PC-9 (cell line): ENCODE measurements at regions of chr5 and their contacts with region 1.

Region 1: GRCh38 chr5:1167728-1168709 is 33.4 kb upstream of the SLC6A19 start:
- DNase-seq: peak; percentile 62 to 87
- H3K4me3 ChIP-seq: no peak overlapping the region
- H3K27ac ChIP-seq: no peak overlapping the region
- H3K4me1 ChIP-seq: no peaks in the 10 kb centered on the region
- H3K27me3 ChIP-seq: peaks cover 42% of the 10 kb centered on the region
- CTCF ChIP-seq: peak; percentile 89

Region 2: DNA sequence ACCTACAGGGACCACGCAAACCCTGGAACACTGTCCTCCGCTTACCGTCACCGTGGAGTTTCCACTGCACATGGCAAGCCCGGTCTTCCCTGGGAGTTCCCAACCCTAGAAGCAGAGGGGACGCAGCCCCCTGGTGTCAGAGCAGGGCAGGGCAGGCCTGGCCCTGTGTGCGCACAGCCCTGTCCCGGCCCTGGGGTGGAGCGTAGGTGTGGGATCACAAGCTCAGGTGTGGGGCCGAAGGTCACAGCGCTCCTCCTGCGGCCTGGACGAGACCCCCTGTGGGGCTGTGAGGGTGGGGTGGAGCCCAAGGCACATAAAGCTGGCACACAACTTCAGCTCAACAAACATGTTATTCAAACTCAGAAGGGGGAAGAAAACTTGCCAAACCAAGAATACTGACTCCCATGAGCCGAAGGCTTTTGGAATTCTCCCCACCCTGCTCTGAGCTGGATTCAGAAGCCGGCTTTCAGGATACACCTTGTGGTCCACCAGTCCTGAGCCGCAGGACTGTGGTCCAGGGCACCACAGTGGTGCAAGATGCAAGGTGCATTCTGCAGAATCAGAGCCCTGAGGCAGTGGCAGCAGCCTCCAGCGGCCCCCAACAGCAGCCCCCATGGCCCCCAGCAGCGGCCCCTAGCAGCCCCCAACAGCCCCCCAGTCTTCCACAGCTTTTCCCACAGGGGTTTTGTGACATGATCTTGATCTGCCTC is 736.9 kb before region 1 on chr5:
- CTCF ChIA-PET with region 1: no interaction called
- POLR2A ChIA-PET with region 1: no interaction called
- intact Hi-C with region 1: no loop called
- DNase-seq: peak in 1 of 2 experiments; percentile 78
- H3K4me3 ChIP-seq: no peak overlapping the region
- H3K27ac ChIP-seq: no peak overlapping the region
- H3K4me1 ChIP-seq: no peaks in the 10 kb centered on the region
- H3K27me3 ChIP-seq: no peaks in the 10 kb centered on the region
- CTCF ChIP-seq: peak; percentile 90

Region 3: GRCh38 chr5:472656-473553 is 695.1 kb before region 1 on chr5:
- CTCF ChIA-PET with region 1: interaction called, 10 read pairs
- POLR2A ChIA-PET with region 1: no interaction called
- intact Hi-C with region 1: no loop called
- DNase-seq: peak; percentile 65 to 99
- H3K4me3 ChIP-seq: peak overlapping the region; percentile 67
- H3K27ac ChIP-seq: peak overlapping the region; percentile 59
- H3K4me1 ChIP-seq: peaks cover 19% of the 10 kb centered on the region
- H3K27me3 ChIP-seq: no peaks in the 10 kb centered on the region
- CTCF ChIP-seq: no peak

Region 4: GRCh38 chr5:923281-923873 is 244.6 kb before region 1 on chr5:
- CTCF ChIA-PET with region 1: interaction called, 18 read pairs
- POLR2A ChIA-PET with region 1: no interaction called
- intact Hi-C with region 1: loop called (anchors 1 kb)
- DNase-seq: peak; percentile 60 to 95
- H3K4me3 ChIP-seq: no peak overlapping the region
- H3K27ac ChIP-seq: no peak overlapping the region
- H3K4me1 ChIP-seq: no peaks in the 10 kb centered on the region
- H3K27me3 ChIP-seq: no peaks in the 10 kb centered on the region
- CTCF ChIP-seq: peak; percentile 96

Region 5: DNA sequence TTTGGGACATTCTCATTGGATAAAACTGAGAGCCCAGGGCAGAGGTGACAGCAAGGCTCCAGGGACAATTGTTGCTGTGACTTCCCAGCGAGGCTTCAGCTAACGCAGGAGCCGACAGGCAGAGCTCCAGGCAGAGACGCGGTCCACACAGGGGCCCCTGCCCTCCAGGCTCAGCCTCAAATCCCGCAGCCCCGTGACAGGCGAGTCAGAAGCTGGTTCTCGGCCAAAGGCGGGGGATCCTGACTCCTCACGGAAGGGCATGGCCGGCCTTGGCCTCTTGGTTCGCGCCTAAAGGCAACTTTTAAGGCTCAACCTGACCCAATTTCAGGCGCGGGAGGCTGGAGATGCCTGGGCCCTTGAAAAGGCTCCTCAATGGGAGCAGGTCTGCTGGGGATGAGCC is 77.5 kb before region 1 on chr5:
- CTCF ChIA-PET with region 1: no interaction called
- POLR2A ChIA-PET with region 1: no interaction called
- intact Hi-C with region 1: no loop called
- DNase-seq: peak in 1 of 2 experiments; percentile 51
- H3K4me3 ChIP-seq: no peak overlapping the region
- H3K27ac ChIP-seq: no peak overlapping the region
- H3K4me1 ChIP-seq: no peaks in the 10 kb centered on the region
- H3K27me3 ChIP-seq: no peaks in the 10 kb centered on the region
- CTCF ChIP-seq: no peak

Region 6: GRCh38 chr5:1199649-1200494 is 31.9 kb after region 1 on chr5:
- CTCF ChIA-PET with region 1: no interaction called
- POLR2A ChIA-PET with region 1: no interaction called
- intact Hi-C with region 1: no loop called
- DNase-seq: no peak
- H3K4me3 ChIP-seq: no peak overlapping the region
- H3K27ac ChIP-seq: no peak overlapping the region
- H3K4me1 ChIP-seq: no peaks in the 10 kb centered on the region
- H3K27me3 ChIP-seq: peaks cover 96% of the 10 kb centered on the region
- CTCF ChIP-seq: no peak

Region 7: GRCh38 chr5:1244976-1245375 is 77.0 kb after region 1 on chr5:
- CTCF ChIA-PET with region 1: no interaction called
- POLR2A ChIA-PET with region 1: no interaction called
- intact Hi-C with region 1: loop called (anchors 1 kb)
- DNase-seq: peak in 1 of 2 experiments; percentile 40
- H3K4me3 ChIP-seq: no peak overlapping the region
- H3K27ac ChIP-seq: no peak overlapping the region
- H3K4me1 ChIP-seq: no peaks in the 10 kb centered on the region
- H3K27me3 ChIP-seq: peaks cover 98% of the 10 kb centered on the region
- CTCF ChIP-seq: peak; percentile 57

Region 8: GRCh38 chr5:1344975-1345838 is 177.2 kb after region 1 on chr5 and contains the start of gene CLPTM1L:
- CTCF ChIA-PET with region 1: no interaction called
- POLR2A ChIA-PET with region 1: no interaction called
- intact Hi-C with region 1: loop called (anchors 5 kb)
- DNase-seq: peak; percentile 78 to 96
- H3K4me3 ChIP-seq: peak within 1 kb of the TSS; percentile 90
- H3K27ac ChIP-seq: 0 out of 2 replicates have a peak within 1 kb of the TSS, but pooled peaks have one; percentile 10
- H3K4me1 ChIP-seq: peaks cover 18% of the 10 kb centered on the region
- H3K27me3 ChIP-seq: no peaks in the 10 kb centered on the region
- CTCF ChIP-seq: no peak
- total RNA-seq, gene CLPTM1L: 260 and 266 TPM in 2 replicates

Region 9: GRCh38 chr5:1511651-1512540 is 343.9 kb after region 1 on chr5:
- CTCF ChIA-PET with region 1: no interaction called
- POLR2A ChIA-PET with region 1: no interaction called
- intact Hi-C with region 1: loop called (anchors 5 kb)
- DNase-seq: peak; percentile 75 to 81
- H3K4me3 ChIP-seq: no peak overlapping the region
- H3K27ac ChIP-seq: no peak overlapping the region
- H3K4me1 ChIP-seq: peaks cover 51% of the 10 kb centered on the region
- H3K27me3 ChIP-seq: no peaks in the 10 kb centered on the region
- CTCF ChIP-seq: peak; percentile 66